A549 (cell line): ENCODE measurements at regions of chr2 and their contacts with region 1.

Region 1: GRCh38 chr2:74482801-74483674 is at the starts of genes CCDC142 and TTC31:
- DNase-seq: peak; percentile 95 to 97
- ATAC-seq: peak; percentile 96 to 97
- H3K4me3 ChIP-seq: peak within 1 kb of the TSS; percentile 70
- H3K27ac ChIP-seq: peak within 1 kb of the TSS; percentile 85 to 97
- H3K4me1 ChIP-seq: peaks cover 20% of the 10 kb centered on the region
- CTCF ChIP-seq: peak; percentile 98
- EP300 ChIP-seq: no peak
- POLR2A ChIP-seq: peak; percentile 49
- RAD21 ChIP-seq: peak; percentile 76 to 86
- polyA plus RNA-seq, gene CCDC142: 6.8 and 8.9 TPM in 2 replicates
- polyA plus RNA-seq, gene TTC31: 29.6 and 32.4 TPM in 2 replicates

Region 2: GRCh38 chr2:74429487-74430451 is 53.3 kb before region 1 on chr2:
- CTCF ChIA-PET with region 1: no interaction called
- POLR2A ChIA-PET with region 1: no interaction called
- DNase-seq: no peak
- ATAC-seq: no peak; a peak in 1 of 6 replicates
- H3K4me3 ChIP-seq: no peak overlapping the region
- H3K27ac ChIP-seq: no peak overlapping the region
- H3K4me1 ChIP-seq: peaks cover 8% of the 10 kb centered on the region; the same call in 1 of the 3 replicates
- CTCF ChIP-seq: no peak
- EP300 ChIP-seq: no peak
- POLR2A ChIP-seq: no peak
- RAD21 ChIP-seq: no peak

Region 3: GRCh38 chr2:74464406-74464928 is 18.6 kb before region 1 on chr2:
- CTCF ChIA-PET with region 1: interaction called, 17 read pairs
- POLR2A ChIA-PET with region 1: interaction called, 4 read pairs
- DNase-seq: no peak
- ATAC-seq: peak; percentile 10 to 13; a peak in 5 of 6 replicates
- H3K4me3 ChIP-seq: peak overlapping the region; percentile 91
- H3K27ac ChIP-seq: peak overlapping the region; percentile 90 to 95
- H3K4me1 ChIP-seq: peaks cover 14% of the 10 kb centered on the region
- CTCF ChIP-seq: no peak
- EP300 ChIP-seq: no peak
- POLR2A ChIP-seq: no peak
- RAD21 ChIP-seq: no peak

Region 4: GRCh38 chr2:74507145-74507925 is 24.3 kb after region 1 on chr2 and contains the start of gene PCGF1:
- CTCF ChIA-PET with region 1: interaction called, 184 read pairs
- POLR2A ChIA-PET with region 1: interaction called, 11 read pairs
- DNase-seq: peak; percentile 97 to 99
- ATAC-seq: peak; percentile 81 to 91
- H3K4me3 ChIP-seq: peak within 1 kb of the TSS; percentile 78
- H3K27ac ChIP-seq: peak within 1 kb of the TSS; percentile 95 to 99
- H3K4me1 ChIP-seq: peaks cover 28% of the 10 kb centered on the region
- CTCF ChIP-seq: peak; percentile 47; the same call in 2 of the 3 replicates
- EP300 ChIP-seq: no peak
- POLR2A ChIP-seq: peak; percentile 77
- RAD21 ChIP-seq: peak in 1 of 2 experiments; percentile 40; a peak in 2 of 5 replicates
- polyA plus RNA-seq, gene PCGF1: 53.6 and 55.3 TPM in 2 replicates

Region 5: GRCh38 chr2:74538881-74539339 is 55.9 kb after region 1 on chr2:
- CTCF ChIA-PET with region 1: interaction called, 72 read pairs
- POLR2A ChIA-PET with region 1: no interaction called
- DNase-seq: no peak
- ATAC-seq: no peak
- H3K4me3 ChIP-seq: no peak overlapping the region
- H3K27ac ChIP-seq: no peak overlapping the region
- H3K4me1 ChIP-seq: no peaks in the 10 kb centered on the region
- CTCF ChIP-seq: no peak
- EP300 ChIP-seq: no peak
- POLR2A ChIP-seq: no peak
- RAD21 ChIP-seq: no peak

Region 6: DNA sequence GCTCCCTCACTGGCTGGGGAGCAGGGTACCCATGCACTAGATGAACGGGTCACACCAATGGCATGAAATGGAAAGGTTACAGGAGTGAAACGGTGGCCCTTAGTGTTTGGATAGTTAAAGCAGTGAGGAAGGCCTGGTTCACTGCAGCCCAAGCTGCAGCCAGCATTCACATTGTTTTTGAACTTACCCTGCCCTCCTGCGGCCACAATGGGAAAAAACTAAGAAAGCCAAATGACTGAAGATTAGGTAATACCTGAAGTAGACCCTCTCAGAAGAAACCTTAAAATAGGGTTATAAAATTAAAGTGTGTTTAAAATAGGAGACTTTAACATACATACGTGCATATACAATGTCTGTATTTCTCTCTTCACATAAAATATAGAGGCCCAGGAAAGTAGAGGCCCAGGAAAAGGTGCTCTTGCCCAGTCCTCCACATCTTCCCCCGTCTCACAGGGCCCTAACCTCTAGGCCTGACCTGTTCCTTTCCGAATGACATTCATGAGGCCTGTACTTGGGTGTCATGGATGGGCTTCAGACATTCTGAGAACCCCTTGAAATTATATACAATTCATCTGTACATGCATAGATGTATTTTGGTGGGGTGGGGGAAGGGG is 104.7 kb after region 1 on chr2:
- CTCF ChIA-PET with region 1: interaction called, 152 read pairs
- POLR2A ChIA-PET with region 1: interaction called, 15 read pairs
- DNase-seq: peak; percentile 77 to 82
- ATAC-seq: peak; percentile 91 to 92
- H3K4me3 ChIP-seq: no peak overlapping the region
- H3K27ac ChIP-seq: no peak overlapping the region
- H3K4me1 ChIP-seq: peaks cover 14% of the 10 kb centered on the region
- CTCF ChIP-seq: peak; percentile 91
- EP300 ChIP-seq: no peak
- POLR2A ChIP-seq: no peak
- RAD21 ChIP-seq: peak; percentile 93 to 95